ENCODE measurements at regions of chr10 and their contacts with region 1.

Region 1: GRCh38 chr10:129096065-129096984 is 370.7 kb upstream of the MGMT start:
- DNase-seq: peak; percentile 80
- ATAC-seq: peak; percentile 78
- H3K4me3 ChIP-seq: no peak overlapping the region
- H3K27ac ChIP-seq: peak overlapping the region; percentile 57
- H3K4me1 ChIP-seq: peaks cover 5% of the 10 kb centered on the region
- H3K27me3 ChIP-seq: no peaks in the 10 kb centered on the region; the same call in 1 of the 2 replicates
- CTCF ChIP-seq: no peak
- POLR2A ChIP-seq: no peak
- RAD21 ChIP-seq: no peak

Region 2: DNA sequence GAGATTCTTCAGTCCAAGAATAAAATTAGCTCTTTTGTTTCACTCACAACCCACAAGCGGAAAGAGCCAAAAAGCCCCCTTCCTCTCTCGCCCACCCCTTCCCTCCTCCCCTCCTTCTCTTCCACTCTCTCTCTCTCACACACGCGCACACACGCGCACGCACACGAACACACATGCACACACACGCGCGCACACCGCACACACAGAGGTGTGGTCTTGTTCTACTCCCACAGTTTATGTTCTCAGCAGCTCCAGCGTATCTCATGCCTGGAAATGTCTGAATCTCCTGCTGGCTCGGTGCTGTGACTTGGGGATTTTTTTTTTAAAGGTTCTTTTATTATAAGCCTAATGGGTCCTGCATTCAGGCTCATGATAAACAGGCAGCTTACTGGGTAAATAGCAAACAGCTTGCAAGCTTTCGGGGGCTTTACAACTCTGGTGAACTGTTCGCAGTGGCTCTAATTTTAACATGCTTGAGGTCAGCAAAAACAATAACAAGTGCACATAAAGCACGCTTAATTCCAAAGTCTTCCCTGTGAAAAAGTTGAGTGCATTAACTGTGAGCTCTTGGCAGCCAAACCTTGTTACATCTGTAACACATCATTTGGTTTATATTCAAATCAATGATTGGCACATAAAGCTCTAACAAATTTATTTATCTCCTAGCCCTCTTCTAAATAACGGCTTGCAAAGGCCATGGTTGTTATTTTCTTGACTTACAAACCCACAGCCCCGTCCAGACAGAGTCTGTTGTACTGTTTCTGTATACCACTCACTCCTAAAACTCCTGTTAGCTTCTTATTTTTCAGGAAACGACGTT is 53.3 kb before region 1 on chr10:
- CTCF ChIA-PET with region 1: no interaction called
- POLR2A ChIA-PET with region 1: no interaction called
- dilution Hi-C with region 1: no loop called
- in situ Hi-C with region 1: no loop called
- intact Hi-C with region 1: loop called (anchors 5 kb)
- DNase-seq: no peak
- ATAC-seq: no peak
- H3K4me3 ChIP-seq: no peak overlapping the region
- H3K27ac ChIP-seq: no peak overlapping the region
- H3K4me1 ChIP-seq: no peaks in the 10 kb centered on the region
- H3K27me3 ChIP-seq: no peaks in the 10 kb centered on the region
- CTCF ChIP-seq: no peak
- POLR2A ChIP-seq: no peak
- RAD21 ChIP-seq: no peak

Region 3: GRCh38 chr10:129279446-129280154 is 183.3 kb after region 1 on chr10:
- CTCF ChIA-PET with region 1: no interaction called
- POLR2A ChIA-PET with region 1: no interaction called
- dilution Hi-C with region 1: no loop called
- in situ Hi-C with region 1: no loop called
- intact Hi-C with region 1: loop called (anchors 5 kb)
- DNase-seq: no peak
- ATAC-seq: no peak
- H3K4me3 ChIP-seq: no peak overlapping the region
- H3K27ac ChIP-seq: no peak overlapping the region
- H3K4me1 ChIP-seq: no peaks in the 10 kb centered on the region
- H3K27me3 ChIP-seq: no peaks in the 10 kb centered on the region
- CTCF ChIP-seq: no peak
- POLR2A ChIP-seq: no peak
- RAD21 ChIP-seq: no peak

Region 4: GRCh38 chr10:129322933-129323820 is 226.9 kb after region 1 on chr10:
- CTCF ChIA-PET with region 1: no interaction called
- POLR2A ChIA-PET with region 1: no interaction called
- dilution Hi-C with region 1: no loop called
- in situ Hi-C with region 1: no loop called
- intact Hi-C with region 1: loop called (anchors 5 kb)
- DNase-seq: no peak
- ATAC-seq: peak; percentile 18
- H3K4me3 ChIP-seq: peak overlapping the region; percentile 32; the same call in 1 of the 2 replicates
- H3K27ac ChIP-seq: peak overlapping the region; percentile 100
- H3K4me1 ChIP-seq: peaks cover 15% of the 10 kb centered on the region
- H3K27me3 ChIP-seq: no peaks in the 10 kb centered on the region
- CTCF ChIP-seq: no peak
- POLR2A ChIP-seq: no peak
- RAD21 ChIP-seq: no peak

Region 5: GRCh38 chr10:129438024-129438423 is 341.7 kb after region 1 on chr10:
- CTCF ChIA-PET with region 1: no interaction called
- POLR2A ChIA-PET with region 1: no interaction called
- dilution Hi-C with region 1: no loop called
- in situ Hi-C with region 1: no loop called
- intact Hi-C with region 1: no loop called
- DNase-seq: no peak
- ATAC-seq: no peak
- H3K4me3 ChIP-seq: no peak overlapping the region
- H3K27ac ChIP-seq: no peak overlapping the region
- H3K4me1 ChIP-seq: no peaks in the 10 kb centered on the region
- H3K27me3 ChIP-seq: no peaks in the 10 kb centered on the region; the same call in 1 of the 2 replicates
- CTCF ChIP-seq: no peak
- POLR2A ChIP-seq: no peak
- RAD21 ChIP-seq: no peak

Region 6: GRCh38 chr10:129958148-129958628 is 861.9 kb after region 1 on chr10:
- CTCF ChIA-PET with region 1: no interaction called
- POLR2A ChIA-PET with region 1: no interaction called
- dilution Hi-C with region 1: no loop called
- in situ Hi-C with region 1: no loop called
- intact Hi-C with region 1: loop called (anchors 5 kb)
- DNase-seq: no peak
- ATAC-seq: no peak
- H3K4me3 ChIP-seq: no peak overlapping the region
- H3K27ac ChIP-seq: no peak overlapping the region
- H3K4me1 ChIP-seq: peaks cover 2% of the 10 kb centered on the region; the same call in 1 of the 2 replicates
- H3K27me3 ChIP-seq: peaks cover 40% of the 10 kb centered on the region
- CTCF ChIP-seq: no peak
- POLR2A ChIP-seq: no peak
- RAD21 ChIP-seq: no peak